ENCODE measurements at regions of chr17 and their contacts with region 1.

Region 1: DNA sequence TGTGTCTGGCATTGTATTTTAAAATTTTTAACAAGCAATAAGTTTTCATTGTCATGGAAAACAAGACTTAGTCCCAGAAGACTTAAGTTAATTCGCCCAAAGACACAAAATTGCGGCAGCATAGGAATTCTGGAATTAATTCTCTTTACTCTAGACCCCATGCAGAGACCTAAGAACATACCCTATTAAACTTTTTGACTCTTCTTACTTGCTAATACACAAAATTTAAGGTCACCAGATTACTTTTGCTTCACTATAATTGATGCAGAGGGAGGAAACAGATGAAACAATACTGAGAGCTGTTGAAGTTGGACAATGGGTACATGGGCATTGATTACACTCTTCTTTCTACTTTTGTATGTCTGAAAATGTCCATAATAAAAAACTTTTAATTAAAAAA is 12.6 kb downstream of the HELZ start:
- DNase-seq: no peak
- H3K4me3 ChIP-seq: no peak overlapping the region
- H3K27ac ChIP-seq: no peak overlapping the region
- H3K4me1 ChIP-seq: no peaks in the 10 kb centered on the region
- H3K27me3 ChIP-seq: no peaks in the 10 kb centered on the region
- CTCF ChIP-seq: no peak
- EP300 ChIP-seq: no peak
- POLR2A ChIP-seq: no peak
- RAD21 ChIP-seq: no peak

Region 2: GRCh38 chr17:67111327-67111726 is 121.1 kb before region 1 on chr17:
- CTCF ChIA-PET with region 1: no interaction called
- POLR2A ChIA-PET with region 1: no interaction called
- DNase-seq: no peak
- H3K4me3 ChIP-seq: no peak overlapping the region
- H3K27ac ChIP-seq: no peak overlapping the region
- H3K4me1 ChIP-seq: no peaks in the 10 kb centered on the region
- H3K27me3 ChIP-seq: no peaks in the 10 kb centered on the region
- CTCF ChIP-seq: no peak
- EP300 ChIP-seq: no peak
- POLR2A ChIP-seq: no peak
- RAD21 ChIP-seq: no peak

Region 3: GRCh38 chr17:67139784-67140657 is 92.4 kb before region 1 on chr17:
- CTCF ChIA-PET with region 1: no interaction called
- POLR2A ChIA-PET with region 1: no interaction called
- DNase-seq: no peak
- H3K4me3 ChIP-seq: no peak overlapping the region
- H3K27ac ChIP-seq: no peak overlapping the region
- H3K4me1 ChIP-seq: peaks cover 0 to 3% (median under 1%) of the 10 kb centered on the region in 4 experiments; a peak in 4 of 7 replicates
- H3K27me3 ChIP-seq: no peaks in the 10 kb centered on the region
- CTCF ChIP-seq: peak; percentile 36 to 58 (median 51); a peak in 3 of 4 replicates
- EP300 ChIP-seq: no peak
- POLR2A ChIP-seq: no peak
- RAD21 ChIP-seq: peak; percentile 61 to 72

Region 4: GRCh38 chr17:67221062-67221998 is 11.1 kb before region 1 on chr17:
- CTCF ChIA-PET with region 1: interaction called, 10 read pairs
- POLR2A ChIA-PET with region 1: interaction called, 3 read pairs
- DNase-seq: no peak
- H3K4me3 ChIP-seq: no peak overlapping the region
- H3K27ac ChIP-seq: no peak overlapping the region
- H3K4me1 ChIP-seq: no peaks in the 10 kb centered on the region
- H3K27me3 ChIP-seq: no peaks in the 10 kb centered on the region
- CTCF ChIP-seq: peak in 2 of 3 experiments; percentile 27 to 40; a peak in 2 of 4 replicates
- EP300 ChIP-seq: no peak
- POLR2A ChIP-seq: no peak
- RAD21 ChIP-seq: peak; percentile 40 to 51

Region 5: GRCh38 chr17:67258821-67259468 is 26.5 kb after region 1 on chr17:
- CTCF ChIA-PET with region 1: no interaction called
- POLR2A ChIA-PET with region 1: no interaction called
- DNase-seq: no peak
- H3K4me3 ChIP-seq: no peak overlapping the region
- H3K27ac ChIP-seq: no peak overlapping the region
- H3K4me1 ChIP-seq: peaks cover 0 to 6% (median 4%) of the 10 kb centered on the region in 4 experiments; a peak in 3 of 7 replicates
- H3K27me3 ChIP-seq: no peaks in the 10 kb centered on the region
- CTCF ChIP-seq: no peak
- EP300 ChIP-seq: no peak
- POLR2A ChIP-seq: no peak
- RAD21 ChIP-seq: no peak

Region 6: DNA sequence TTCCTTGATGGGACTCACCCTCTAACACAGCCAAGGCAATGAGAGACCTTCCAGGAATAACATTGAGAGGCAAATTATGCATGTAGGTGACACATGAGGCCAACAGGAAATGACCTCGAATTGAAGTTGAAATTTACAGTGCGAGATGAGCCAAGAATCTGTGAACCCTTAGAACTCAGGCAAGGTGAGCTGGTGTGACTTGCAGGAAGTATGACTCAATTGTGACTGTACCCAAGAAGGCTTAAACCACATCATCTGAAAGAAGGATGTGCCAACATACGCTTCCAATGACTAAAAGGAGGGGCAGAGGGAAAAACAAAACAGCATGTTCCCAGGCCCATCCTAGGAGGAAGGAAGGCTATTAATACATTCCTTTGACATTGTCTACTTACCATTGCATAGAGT is 189.4 kb after region 1 on chr17:
- CTCF ChIA-PET with region 1: no interaction called
- POLR2A ChIA-PET with region 1: no interaction called
- DNase-seq: no peak
- H3K4me3 ChIP-seq: no peak overlapping the region
- H3K27ac ChIP-seq: no peak overlapping the region
- H3K4me1 ChIP-seq: peaks cover 0 to 4% (median 0%) of the 10 kb centered on the region in 4 experiments; a peak in 1 of 7 replicates
- H3K27me3 ChIP-seq: no peaks in the 10 kb centered on the region
- CTCF ChIP-seq: no peak
- EP300 ChIP-seq: no peak
- POLR2A ChIP-seq: no peak
- RAD21 ChIP-seq: no peak